ENCODE measurements at regions of chrX and their contacts with region 1.

Region 1: GRCh38 chrX:131792789-131793462 is 230.2 kb upstream of the STK26 start:
- DNase-seq: peak; percentile 93
- ATAC-seq: peak; percentile 86
- H3K4me3 ChIP-seq: peak overlapping the region; percentile 47
- H3K27ac ChIP-seq: peak overlapping the region; percentile 69; the same call in 1 of the 2 replicates
- H3K4me1 ChIP-seq: no peaks in the 10 kb centered on the region
- H3K27me3 ChIP-seq: peaks cover 7% of the 10 kb centered on the region
- CTCF ChIP-seq: peak; percentile 66
- POLR2A ChIP-seq: no peak
- RAD21 ChIP-seq: peak; percentile 76

Region 2: DNA sequence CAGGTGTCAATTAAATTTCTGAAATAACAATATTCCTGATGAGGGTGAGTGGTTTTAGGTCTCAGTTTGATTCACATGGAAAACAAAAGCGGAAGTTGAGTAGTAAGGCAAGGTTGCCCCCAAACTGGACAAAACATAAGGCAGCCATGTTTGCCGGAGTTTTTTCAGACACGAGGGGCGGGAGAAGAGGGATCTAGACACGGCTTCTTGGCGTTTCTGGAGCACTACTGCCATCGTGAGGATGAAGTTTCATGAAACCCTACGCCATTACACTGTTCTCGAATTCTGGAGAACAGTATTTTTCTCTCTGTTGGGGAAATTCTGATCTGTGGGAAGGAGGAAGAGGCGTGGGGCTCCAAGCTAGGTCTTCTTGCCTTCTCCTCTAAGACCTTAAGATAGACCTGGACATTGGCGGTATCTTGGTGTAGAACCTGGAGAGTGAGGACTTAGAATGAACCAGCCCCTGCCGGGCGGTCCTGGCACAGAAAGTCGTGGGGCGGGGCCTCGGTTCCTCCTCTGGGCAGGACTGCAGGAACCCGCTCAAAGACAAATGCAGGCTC is 88.7 kb before region 1 on chrX:
- CTCF ChIA-PET with region 1: no interaction called
- POLR2A ChIA-PET with region 1: no interaction called
- dilution Hi-C with region 1: no loop called
- in situ Hi-C with region 1: no loop called
- intact Hi-C with region 1: loop called (anchors 1 kb)
- DNase-seq: peak; percentile 85
- ATAC-seq: peak; percentile 82
- H3K4me3 ChIP-seq: peak overlapping the region; percentile 65
- H3K27ac ChIP-seq: no peak overlapping the region
- H3K4me1 ChIP-seq: no peaks in the 10 kb centered on the region
- H3K27me3 ChIP-seq: no peaks in the 10 kb centered on the region
- CTCF ChIP-seq: peak; percentile 69
- POLR2A ChIP-seq: no peak
- RAD21 ChIP-seq: peak; percentile 74

Region 3: GRCh38 chrX:131728295-131729145 is 64.4 kb before region 1 on chrX:
- CTCF ChIA-PET with region 1: no interaction called
- POLR2A ChIA-PET with region 1: no interaction called
- dilution Hi-C with region 1: no loop called
- in situ Hi-C with region 1: no loop called
- intact Hi-C with region 1: loop called (anchors 1 kb)
- DNase-seq: peak; percentile 86
- ATAC-seq: peak; percentile 72
- H3K4me3 ChIP-seq: peak overlapping the region; percentile 65
- H3K27ac ChIP-seq: peak overlapping the region; percentile 99
- H3K4me1 ChIP-seq: no peaks in the 10 kb centered on the region
- H3K27me3 ChIP-seq: no peaks in the 10 kb centered on the region; the same call in 1 of the 2 replicates
- CTCF ChIP-seq: peak; percentile 67
- POLR2A ChIP-seq: no peak
- RAD21 ChIP-seq: peak; percentile 75

Region 4: DNA sequence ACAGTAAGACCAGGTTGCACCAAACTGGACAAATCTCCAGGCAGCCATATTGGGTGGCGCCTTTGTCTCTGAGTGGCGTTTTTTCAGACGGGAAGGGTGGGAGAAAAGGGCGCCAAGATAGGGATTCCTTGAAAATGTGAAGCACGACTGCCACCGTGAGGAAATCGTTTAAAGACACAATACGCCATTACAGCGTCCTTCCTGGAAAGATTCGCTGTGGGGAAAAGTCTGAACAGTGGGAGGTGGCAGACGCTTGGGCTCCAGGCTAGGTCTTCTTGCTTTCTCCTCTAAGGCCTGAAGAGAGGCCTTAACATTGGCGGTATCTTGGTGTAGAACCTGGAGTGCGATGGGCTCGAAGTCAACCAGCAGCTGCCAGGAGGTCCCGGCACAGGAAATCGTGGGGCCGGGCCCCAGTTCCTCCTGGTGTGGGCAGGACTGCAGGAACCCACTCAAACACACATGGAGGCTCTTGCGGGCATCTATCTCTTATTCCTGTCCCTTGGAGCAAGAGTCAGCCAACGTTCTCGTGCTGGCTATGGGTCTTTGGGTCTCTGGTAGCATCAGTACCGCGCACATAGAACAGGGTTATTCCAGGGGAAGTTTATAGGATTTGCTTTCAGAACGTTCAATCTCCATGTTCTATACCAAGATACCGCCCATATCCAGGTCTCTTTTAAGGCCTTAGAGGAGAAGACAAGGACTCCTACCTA is 40.3 kb before region 1 on chrX:
- CTCF ChIA-PET with region 1: no interaction called
- POLR2A ChIA-PET with region 1: no interaction called
- dilution Hi-C with region 1: no loop called
- in situ Hi-C with region 1: no loop called
- intact Hi-C with region 1: loop called (anchors 1 kb)
- DNase-seq: peak; percentile 88
- ATAC-seq: peak; percentile 75
- H3K4me3 ChIP-seq: peak overlapping the region; percentile 62
- H3K27ac ChIP-seq: peak overlapping the region; percentile 96
- H3K4me1 ChIP-seq: no peaks in the 10 kb centered on the region
- H3K27me3 ChIP-seq: no peaks in the 10 kb centered on the region; the same call in 1 of the 2 replicates
- CTCF ChIP-seq: peak; percentile 58
- POLR2A ChIP-seq: no peak
- RAD21 ChIP-seq: peak; percentile 62

Region 5: DNA sequence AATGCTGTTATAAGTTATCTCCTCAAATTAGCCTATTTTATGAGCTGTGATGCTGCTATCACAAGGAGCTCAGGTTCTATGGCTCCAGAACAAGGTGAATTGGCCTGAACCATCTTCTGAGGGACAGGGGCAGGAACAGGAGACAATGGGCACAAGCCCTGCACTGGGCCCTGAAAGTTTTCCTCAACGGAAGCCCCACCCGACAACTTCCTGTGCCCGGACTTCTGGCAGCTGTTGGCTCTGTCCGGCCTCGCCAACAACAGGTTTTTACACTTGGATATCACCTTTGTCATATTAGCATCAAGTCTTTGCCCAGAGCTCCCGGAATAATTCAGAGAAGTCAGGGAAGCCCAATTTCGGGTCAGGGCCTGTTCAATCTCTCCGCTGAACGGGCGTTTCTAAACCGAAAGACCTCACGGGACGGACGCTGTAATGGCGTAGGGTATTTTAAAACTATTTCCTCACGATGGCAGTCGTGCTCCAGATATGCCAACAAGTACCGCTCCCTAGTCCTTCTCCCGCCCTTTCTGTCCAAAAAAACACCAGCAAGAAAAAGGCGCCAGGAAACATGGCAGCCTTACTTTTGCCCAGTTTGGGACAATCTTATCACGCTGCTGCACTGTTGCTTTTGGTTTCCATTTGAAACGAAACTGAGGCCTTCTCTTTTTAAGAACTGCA is 29.2 kb after region 1 on chrX:
- CTCF ChIA-PET with region 1: no interaction called
- POLR2A ChIA-PET with region 1: no interaction called
- dilution Hi-C with region 1: no loop called
- in situ Hi-C with region 1: no loop called
- intact Hi-C with region 1: loop called (anchors 1 kb)
- DNase-seq: peak; percentile 85
- ATAC-seq: peak; percentile 94
- H3K4me3 ChIP-seq: peak overlapping the region; percentile 61
- H3K27ac ChIP-seq: peak overlapping the region; percentile 94
- H3K4me1 ChIP-seq: no peaks in the 10 kb centered on the region
- H3K27me3 ChIP-seq: peaks cover 5% of the 10 kb centered on the region
- CTCF ChIP-seq: peak; percentile 70
- POLR2A ChIP-seq: no peak
- RAD21 ChIP-seq: peak; percentile 76

Region 6: GRCh38 chrX:132153166-132153565 is 360.2 kb after region 1 on chrX:
- CTCF ChIA-PET with region 1: no interaction called
- POLR2A ChIA-PET with region 1: no interaction called
- dilution Hi-C with region 1: no loop called
- in situ Hi-C with region 1: no loop called
- intact Hi-C with region 1: no loop called
- DNase-seq: no peak
- ATAC-seq: no peak
- H3K4me3 ChIP-seq: no peak overlapping the region
- H3K27ac ChIP-seq: no peak overlapping the region
- H3K4me1 ChIP-seq: no peaks in the 10 kb centered on the region
- H3K27me3 ChIP-seq: no peaks in the 10 kb centered on the region
- CTCF ChIP-seq: no peak
- POLR2A ChIP-seq: no peak
- RAD21 ChIP-seq: no peak